ENCODE measurements at regions of chr7 and their contacts with region 1.

Region 1: GRCh38 chr7:37510043-37510634 is 61.5 kb upstream of the ELMO1 start:
- DNase-seq: peak; percentile 31
- ATAC-seq: no peak
- H3K4me3 Mint-ChIP-seq: no peak overlapping the region
- H3K27ac Mint-ChIP-seq: no peak overlapping the region
- H3K4me1 Mint-ChIP-seq: no peaks in the 10 kb centered on the region
- H3K27me3 Mint-ChIP-seq: peaks cover 20% of the 10 kb centered on the region

Region 2: GRCh38 chr7:37290731-37291130 is 219.4 kb before region 1 on chr7:
- CTCF ChIA-PET with region 1: no interaction called
- POLR2A ChIA-PET with region 1: no interaction called
- DNase-seq: no peak
- ATAC-seq: no peak
- H3K4me3 Mint-ChIP-seq: no peak overlapping the region
- H3K27ac Mint-ChIP-seq: no peak overlapping the region
- H3K4me1 Mint-ChIP-seq: peaks cover 10% of the 10 kb centered on the region
- H3K27me3 Mint-ChIP-seq: no peaks in the 10 kb centered on the region

Region 3: DNA sequence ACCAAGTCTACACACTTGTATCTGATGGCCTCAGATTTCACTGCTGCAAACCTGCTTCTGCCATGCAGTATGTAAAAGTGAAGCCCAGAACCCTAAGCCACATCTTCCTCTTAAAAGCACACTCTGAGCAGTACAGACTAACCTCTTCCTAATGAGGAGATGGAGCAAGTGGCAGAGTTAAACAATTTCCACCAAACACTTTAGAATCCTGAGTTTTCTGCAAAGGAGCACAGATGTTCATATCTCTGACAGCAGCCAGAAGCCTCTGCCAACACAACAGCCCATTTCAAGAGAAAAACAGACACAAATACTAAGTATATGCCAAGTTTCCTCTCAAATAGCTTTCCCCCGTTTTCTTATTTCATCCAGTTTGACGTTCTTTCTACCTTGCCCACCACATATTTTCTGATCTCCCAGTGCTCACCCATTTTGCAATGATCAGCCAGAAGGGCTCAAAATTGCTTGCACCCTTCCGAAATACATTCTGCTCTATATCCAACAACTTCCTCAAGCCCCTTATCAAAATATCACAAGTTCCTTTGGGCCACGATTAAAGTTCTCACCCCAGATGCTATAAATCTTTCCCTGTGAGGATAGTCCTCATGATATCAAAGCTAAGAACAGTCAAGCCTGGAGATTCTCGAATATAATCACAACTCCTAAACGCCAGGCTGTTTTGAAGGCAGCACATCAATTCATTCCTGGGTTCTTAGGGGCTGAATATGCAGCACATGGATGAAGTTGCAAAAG is 89.0 kb before region 1 on chr7:
- CTCF ChIA-PET with region 1: no interaction called
- POLR2A ChIA-PET with region 1: no interaction called
- DNase-seq: no peak
- ATAC-seq: no peak
- H3K4me3 Mint-ChIP-seq: no peak overlapping the region
- H3K27ac Mint-ChIP-seq: no peak overlapping the region
- H3K4me1 Mint-ChIP-seq: no peaks in the 10 kb centered on the region
- H3K27me3 Mint-ChIP-seq: no peaks in the 10 kb centered on the region

Region 4: DNA sequence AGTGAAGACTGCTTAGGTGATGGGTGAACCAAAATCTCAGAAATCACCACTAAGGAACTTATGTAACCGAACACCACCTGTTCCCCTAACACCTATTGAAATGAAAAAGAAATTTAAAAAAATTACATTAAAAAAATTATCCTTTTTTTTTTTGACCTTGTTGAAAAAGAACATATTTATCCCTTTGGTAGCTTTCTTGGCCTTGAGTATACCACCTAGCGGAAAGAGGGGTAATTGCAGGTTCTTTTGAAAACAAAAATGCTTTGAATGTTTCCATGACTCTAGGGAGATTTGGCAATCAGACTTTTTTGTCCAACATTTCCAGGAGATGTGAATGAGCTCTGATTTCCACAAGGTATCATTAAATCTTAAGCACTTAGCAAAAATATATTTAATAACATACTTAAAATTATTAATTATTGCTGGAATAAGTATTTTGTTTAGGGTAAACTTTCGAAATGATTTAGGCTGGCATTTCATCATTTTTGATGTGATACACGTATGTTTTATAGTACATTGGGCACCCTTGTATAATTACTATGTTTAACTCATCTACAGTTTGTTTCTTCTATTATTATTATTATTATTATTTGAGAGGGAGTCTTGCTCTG is 14.5 kb before region 1 on chr7:
- CTCF ChIA-PET with region 1: interaction called, 31 read pairs
- POLR2A ChIA-PET with region 1: no interaction called
- DNase-seq: no peak
- ATAC-seq: no peak
- H3K4me3 Mint-ChIP-seq: no peak overlapping the region
- H3K27ac Mint-ChIP-seq: no peak overlapping the region
- H3K4me1 Mint-ChIP-seq: peaks cover 5% of the 10 kb centered on the region
- H3K27me3 Mint-ChIP-seq: no peaks in the 10 kb centered on the region